Common myeloid progenitor, CD34-positive (primary cell): ENCODE measurements at regions of chr12 and their contacts with region 1.

Region 1: DNA sequence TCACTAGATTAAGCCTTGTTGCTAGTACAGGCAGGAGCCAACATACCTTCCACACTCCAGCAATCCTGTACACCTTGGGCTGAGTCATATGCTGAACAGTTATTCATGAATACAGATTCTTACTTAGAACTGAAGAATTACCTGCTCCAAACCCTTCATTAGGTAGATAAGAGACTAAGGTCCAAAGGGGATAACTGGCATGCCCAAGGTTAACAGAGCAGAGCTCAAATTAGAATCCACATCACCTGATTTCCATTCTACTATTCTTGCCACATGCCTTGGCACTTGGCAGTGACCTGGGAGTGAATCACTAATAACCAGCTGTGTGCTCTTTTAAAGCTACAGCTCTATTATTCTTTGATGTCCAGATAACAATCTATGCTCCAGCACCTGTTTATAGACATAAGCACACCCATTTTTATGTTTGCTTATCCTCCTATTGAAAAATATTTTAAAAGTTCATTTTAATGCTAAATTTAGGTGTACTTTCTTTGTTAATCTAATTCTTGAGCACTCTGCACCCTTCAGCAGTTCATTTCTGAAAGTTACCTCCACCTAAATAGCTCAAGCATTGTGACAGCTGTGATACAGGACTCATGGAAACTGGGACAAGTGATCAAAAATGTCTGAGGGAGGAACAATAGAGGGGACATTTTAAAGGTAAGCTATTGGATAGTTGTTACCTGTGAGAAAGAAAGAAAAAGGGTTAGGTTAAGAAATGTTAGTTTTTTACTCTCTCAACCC is 19.4 kb downstream of the LPCAT3 start:
- DNase-seq: no peak
- H3K4me3 ChIP-seq: no peak overlapping the region
- H3K27ac ChIP-seq: no peak overlapping the region
- H3K4me1 ChIP-seq: peaks cover 0 to 2% (median 0%) of the 10 kb centered on the region in 4 experiments
- H3K27me3 ChIP-seq: no peaks in the 10 kb centered on the region

Region 2: DNA sequence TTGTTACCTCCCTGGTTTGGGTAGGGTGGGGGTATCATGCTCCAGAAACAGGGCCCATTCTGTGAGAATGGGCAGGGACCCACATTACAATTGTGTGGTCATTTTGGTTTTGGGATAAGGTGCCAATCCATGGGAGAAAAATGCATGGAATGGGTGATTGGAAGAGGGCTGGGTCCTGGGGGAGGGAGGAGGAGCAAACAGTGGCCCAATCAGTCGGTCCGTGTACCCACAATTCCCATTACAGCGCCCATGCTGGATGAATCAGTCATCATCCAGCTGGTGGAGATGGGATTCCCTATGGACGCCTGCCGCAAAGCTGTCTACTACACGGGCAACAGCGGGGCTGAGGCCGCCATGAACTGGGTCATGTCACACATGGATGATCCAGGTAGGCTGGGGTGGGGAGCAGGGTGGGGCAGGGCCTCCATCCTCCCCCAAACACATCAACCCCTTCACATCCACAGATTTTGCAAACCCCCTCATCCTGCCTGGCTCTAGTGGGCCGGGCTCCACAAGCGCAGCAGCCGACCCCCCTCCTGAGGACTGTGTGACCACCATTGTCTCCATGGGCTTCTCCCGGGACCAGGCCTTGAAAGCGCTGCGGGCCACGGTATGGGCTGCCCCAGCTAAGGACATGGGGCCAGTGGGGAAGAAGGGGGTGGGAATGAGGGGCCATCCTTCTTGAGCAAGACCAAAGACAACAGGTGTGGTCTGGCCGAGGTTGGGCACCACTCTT is 135.1 kb before region 1 on chr12:
- CTCF ChIA-PET with region 1: no interaction called
- POLR2A ChIA-PET with region 1: no interaction called
- DNase-seq: no peak
- H3K4me3 ChIP-seq: no peak overlapping the region
- H3K27ac ChIP-seq: no peak overlapping the region
- H3K4me1 ChIP-seq: peaks cover 7 to 21% (median 19%) of the 10 kb centered on the region in 4 experiments
- H3K27me3 ChIP-seq: no peaks in the 10 kb centered on the region

Region 3: GRCh38 chr12:6978609-6979011 is 20.3 kb before region 1 on chr12:
- CTCF ChIA-PET with region 1: interaction called, 10 read pairs
- POLR2A ChIA-PET with region 1: interaction called, 3 read pairs
- DNase-seq: peak in 1 of 3 donors; percentile 18
- H3K4me3 ChIP-seq: no peak overlapping the region
- H3K27ac ChIP-seq: peak overlapping the region in 1 of 2 experiments; percentile 37
- H3K4me1 ChIP-seq: peaks cover 0 to 3% (median 0%) of the 10 kb centered on the region in 4 experiments
- H3K27me3 ChIP-seq: no peaks in the 10 kb centered on the region